Activated T-helper 1 cell treated with anti-CD3 and anti-CD28 coated beads, Interleukin-12 subunit alpha, Interleukin-12 subunit beta, Interleukin-2, Interleukin-4 antibody, amounts not matched to agents 30 ng/mL and 10 ng/mL and 1 ng/mL, durations not matched to agents 14 hours and 24 hours and 36 hours (primary cell): ENCODE measurements at regions of chr10 and their contacts with region 1.

Region 1: DNA sequence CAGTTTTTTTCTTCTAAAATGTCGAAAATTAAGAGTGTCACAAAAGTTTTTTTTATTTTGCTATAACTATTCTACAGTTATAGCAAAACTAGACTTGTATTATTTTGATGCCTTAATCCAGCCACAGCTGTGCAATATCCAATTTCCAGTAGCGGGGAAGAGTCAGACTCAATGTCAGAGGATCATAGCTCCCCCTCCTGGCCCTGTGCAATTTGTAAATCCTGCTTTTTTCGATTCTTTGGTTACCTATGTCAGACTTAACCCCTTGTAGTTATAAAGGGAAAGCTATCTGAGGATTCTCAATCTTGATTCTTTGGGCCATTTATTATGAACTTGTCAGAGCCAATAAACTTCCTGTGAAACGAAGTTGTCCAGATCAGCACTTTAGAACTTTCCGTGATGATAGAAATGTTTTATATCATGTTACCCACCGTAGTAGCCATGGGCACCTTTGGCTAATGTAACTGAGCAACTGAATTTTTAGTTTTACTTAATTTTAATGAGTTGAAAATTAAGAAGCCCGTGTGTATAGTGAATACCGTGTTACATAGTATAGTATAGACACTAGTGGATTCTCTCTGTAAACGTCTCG is 87.7 kb upstream of the PRKCQ start:
- DNase-seq: peak; percentile 26
- H3K4me3 Mint-ChIP-seq: no peak overlapping the region
- H3K27ac Mint-ChIP-seq: no peak overlapping the region
- H3K4me1 Mint-ChIP-seq: peaks cover 36% of the 10 kb centered on the region
- H3K27me3 Mint-ChIP-seq: peaks cover 20% of the 10 kb centered on the region

Region 2: DNA sequence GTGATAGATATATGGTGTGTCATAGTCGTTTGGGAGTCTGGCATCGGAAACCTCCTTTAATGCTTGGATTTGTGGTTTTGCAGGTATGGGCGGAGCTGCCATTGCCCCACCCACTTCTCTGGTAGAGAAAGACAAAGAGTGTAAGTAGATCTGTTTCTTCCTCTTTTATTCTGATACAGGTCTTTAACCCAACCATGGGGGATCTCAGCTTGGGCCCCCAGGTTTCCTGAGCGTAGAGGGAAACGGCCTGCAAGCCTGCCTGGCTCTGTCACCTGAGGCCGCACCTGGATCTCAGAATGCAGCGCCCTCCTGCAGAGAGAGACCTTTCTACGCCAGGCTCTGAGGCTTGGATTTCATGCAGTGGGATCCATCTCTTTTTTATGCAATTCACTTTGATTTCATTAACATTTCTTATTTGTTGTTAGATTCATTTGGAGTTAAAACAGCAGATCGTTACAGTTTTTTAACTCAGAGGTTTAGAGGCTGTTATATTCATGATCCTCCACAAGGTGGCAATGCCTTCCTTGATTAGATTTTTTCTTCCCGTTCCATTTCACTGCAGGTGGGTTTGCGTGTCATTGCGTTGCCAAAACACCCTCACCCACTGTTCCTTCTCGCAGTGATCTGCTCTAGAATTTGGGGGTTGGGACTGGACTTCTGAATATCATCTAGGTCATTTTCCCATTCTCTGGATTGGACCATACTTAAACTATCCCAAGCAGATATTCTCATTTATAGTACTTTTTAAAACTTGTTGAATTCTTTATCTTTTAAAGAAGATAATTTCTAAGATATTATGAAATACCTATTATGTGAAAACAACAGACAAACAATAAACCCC is 559.0 kb before region 1 on chr10:
- intact Hi-C with region 1: loop called (anchors 5 kb)
- DNase-seq: peak; percentile 22
- H3K4me3 Mint-ChIP-seq: no peak overlapping the region
- H3K27ac Mint-ChIP-seq: peak overlapping the region; percentile 59
- H3K4me1 Mint-ChIP-seq: peaks cover 56% of the 10 kb centered on the region
- H3K27me3 Mint-ChIP-seq: no peaks in the 10 kb centered on the region

Region 3: GRCh38 chr10:6445501-6446316 is 222.1 kb before region 1 on chr10:
- intact Hi-C with region 1: loop called (anchors 1 kb)
- DNase-seq: peak; percentile 30
- H3K4me3 Mint-ChIP-seq: no peak overlapping the region
- H3K27ac Mint-ChIP-seq: peak overlapping the region; percentile 36
- H3K4me1 Mint-ChIP-seq: peaks cover 34% of the 10 kb centered on the region
- H3K27me3 Mint-ChIP-seq: no peaks in the 10 kb centered on the region

Region 4: GRCh38 chr10:6498771-6499170 is 169.0 kb before region 1 on chr10:
- intact Hi-C with region 1: loop called (anchors 2 kb)
- DNase-seq: peak; percentile 63
- H3K4me3 Mint-ChIP-seq: peak overlapping the region; percentile 68
- H3K27ac Mint-ChIP-seq: peak overlapping the region; percentile 88
- H3K4me1 Mint-ChIP-seq: peaks cover 44% of the 10 kb centered on the region
- H3K27me3 Mint-ChIP-seq: no peaks in the 10 kb centered on the region

Region 5: DNA sequence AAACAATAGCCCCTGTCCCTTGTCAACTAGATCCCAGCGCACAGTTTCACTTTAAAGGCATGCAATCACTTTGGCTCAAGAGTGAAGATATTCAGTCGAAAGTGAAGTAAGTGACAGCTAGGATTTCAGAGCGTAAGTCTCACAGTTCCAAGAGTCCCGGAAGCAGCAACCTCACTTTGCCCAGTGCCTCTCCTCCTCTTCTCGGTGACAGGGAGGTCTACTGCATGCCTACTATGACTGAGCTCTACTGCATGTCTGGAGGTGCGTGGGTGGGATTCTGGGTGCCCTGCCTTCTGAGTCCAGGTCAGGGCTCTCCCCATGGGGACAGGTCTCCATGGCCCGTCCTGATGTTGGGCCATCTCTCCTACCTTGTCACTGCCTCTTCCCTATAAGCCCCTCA is 104.7 kb before region 1 on chr10:
- intact Hi-C with region 1: loop called (anchors 1 kb)
- DNase-seq: peak; percentile 43
- H3K4me3 Mint-ChIP-seq: peak overlapping the region; percentile 74
- H3K27ac Mint-ChIP-seq: peak overlapping the region; percentile 81
- H3K4me1 Mint-ChIP-seq: peaks cover 81% of the 10 kb centered on the region
- H3K27me3 Mint-ChIP-seq: no peaks in the 10 kb centered on the region

Region 6: GRCh38 chr10:6607778-6608177 is 60.0 kb before region 1 on chr10:
- intact Hi-C with region 1: loop called (anchors 1 kb)
- DNase-seq: no peak
- H3K4me3 Mint-ChIP-seq: no peak overlapping the region
- H3K27ac Mint-ChIP-seq: peak overlapping the region; percentile 69
- H3K4me1 Mint-ChIP-seq: peaks cover 91% of the 10 kb centered on the region
- H3K27me3 Mint-ChIP-seq: no peaks in the 10 kb centered on the region

Region 7: DNA sequence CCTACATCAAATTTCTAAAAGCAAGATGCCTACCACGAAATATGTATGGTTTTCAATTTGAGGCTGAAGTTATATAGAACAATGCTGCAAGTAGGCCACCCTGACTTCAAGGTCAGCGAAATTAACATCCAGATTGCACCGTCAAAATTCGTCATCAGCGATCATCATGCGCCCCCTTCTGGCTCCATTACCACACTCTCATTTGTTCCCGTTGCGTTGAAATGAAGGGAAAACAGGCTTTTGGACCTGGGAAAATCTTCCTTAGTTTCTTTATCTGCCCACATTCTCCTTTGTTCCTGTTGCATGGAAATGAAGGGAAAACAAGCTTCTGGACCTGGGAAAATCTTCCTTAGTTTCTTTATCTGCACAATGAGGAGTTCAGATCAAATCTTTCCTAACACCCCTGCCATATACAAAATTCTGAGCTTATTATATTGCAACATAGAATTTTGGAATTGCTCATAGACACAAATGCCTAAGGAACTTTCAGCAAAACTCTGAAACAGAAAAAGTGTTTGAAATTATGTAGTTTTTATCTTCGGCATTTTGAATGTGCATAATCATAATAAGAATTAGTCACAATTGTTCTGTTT is 10.5 kb after region 1 on chr10:
- intact Hi-C with region 1: loop called (anchors 1 kb)
- DNase-seq: peak; percentile 31
- H3K4me3 Mint-ChIP-seq: no peak overlapping the region
- H3K27ac Mint-ChIP-seq: no peak overlapping the region
- H3K4me1 Mint-ChIP-seq: peaks cover 19% of the 10 kb centered on the region
- H3K27me3 Mint-ChIP-seq: peaks cover 38% of the 10 kb centered on the region

Region 8: GRCh38 chr10:6701289-6701688 is 33.5 kb after region 1 on chr10:
- intact Hi-C with region 1: no loop called
- DNase-seq: no peak
- H3K4me3 Mint-ChIP-seq: no peak overlapping the region
- H3K27ac Mint-ChIP-seq: no peak overlapping the region
- H3K4me1 Mint-ChIP-seq: no peaks in the 10 kb centered on the region
- H3K27me3 Mint-ChIP-seq: peaks cover 15% of the 10 kb centered on the region

Region 9: GRCh38 chr10:6929148-6929830 is 261.5 kb after region 1 on chr10:
- intact Hi-C with region 1: no loop called
- DNase-seq: no peak
- H3K4me3 Mint-ChIP-seq: peak overlapping the region; percentile 19
- H3K27ac Mint-ChIP-seq: no peak overlapping the region
- H3K4me1 Mint-ChIP-seq: peaks cover 54% of the 10 kb centered on the region
- H3K27me3 Mint-ChIP-seq: peaks cover 6% of the 10 kb centered on the region